HepG2 (cell line): ENCODE measurements at regions of chr16 and their contacts with region 1.

Region 1: GRCh38 chr16:24930437-24930836 is 84.7 kb downstream of the SLC5A11 start:
- DNase-seq: no peak
- ATAC-seq: no peak
- H3K4me3 ChIP-seq: no peak overlapping the region
- H3K27ac ChIP-seq: no peak overlapping the region
- H3K4me1 ChIP-seq: peaks cover 13% of the 10 kb centered on the region
- H3K27me3 ChIP-seq: no peaks in the 10 kb centered on the region
- CTCF ChIP-seq: no peak
- EP300 ChIP-seq: no peak
- POLR2A ChIP-seq: no peak
- RAD21 ChIP-seq: no peak

Region 2: DNA sequence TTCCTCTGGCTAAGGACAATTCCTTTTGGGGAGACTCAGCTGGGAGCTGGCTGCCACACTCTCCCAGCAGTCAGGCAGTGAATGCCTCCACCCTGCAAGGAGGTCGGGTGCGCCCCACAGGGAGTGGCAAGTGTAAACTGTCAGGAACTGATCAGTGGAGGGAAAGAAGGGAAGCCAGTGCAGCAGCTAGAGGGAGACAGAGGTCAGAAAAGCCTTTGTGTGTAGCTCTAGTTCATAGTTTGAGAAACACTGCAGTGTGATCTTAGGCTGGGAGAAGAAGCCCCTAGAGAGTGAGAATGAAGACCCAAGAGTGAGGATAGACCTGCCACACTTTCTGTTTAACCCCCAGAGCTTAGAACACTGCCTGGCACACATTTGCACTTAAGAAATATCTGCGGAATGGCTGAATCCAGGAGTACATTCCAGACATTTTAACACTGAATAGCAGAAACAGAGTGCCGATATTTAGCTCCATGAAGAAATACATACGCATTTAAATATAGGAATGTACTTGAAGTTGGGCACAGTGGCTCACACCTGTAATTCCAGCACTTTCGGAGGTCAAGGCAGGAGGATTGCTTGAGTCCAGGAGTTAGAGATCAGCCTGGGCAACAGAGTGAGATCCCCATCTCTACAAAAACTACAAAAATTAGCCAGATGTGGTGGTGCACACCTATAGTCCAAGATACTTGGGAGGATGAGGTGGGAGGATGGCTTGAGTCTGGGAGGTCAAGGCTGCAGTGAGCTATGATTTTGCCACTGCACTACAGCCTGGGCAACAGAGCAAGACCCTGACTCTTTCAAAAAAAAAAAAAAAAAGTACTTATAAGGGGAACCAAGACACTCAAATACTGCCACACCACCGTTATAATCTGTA is 95.7 kb before region 1 on chr16:
- CTCF ChIA-PET with region 1: no interaction called
- POLR2A ChIA-PET with region 1: no interaction called
- in situ Hi-C with region 1: no loop called
- intact Hi-C with region 1: loop called (anchors 5 kb)
- DNase-seq: peak; percentile 62
- ATAC-seq: peak; percentile 81
- H3K4me3 ChIP-seq: no peak overlapping the region
- H3K27ac ChIP-seq: no peak overlapping the region
- H3K4me1 ChIP-seq: peaks cover 29% of the 10 kb centered on the region
- H3K27me3 ChIP-seq: no peaks in the 10 kb centered on the region
- CTCF ChIP-seq: peak; percentile 91
- EP300 ChIP-seq: no peak
- POLR2A ChIP-seq: no peak
- RAD21 ChIP-seq: peak; percentile 82